Posterior vena cava (tissue), 2 donors: ENCODE measurements at regions of chr2 and their contacts with region 1.

Region 1: GRCh38 chr2:192645811-192646598 is 451.3 kb upstream of the TMEFF2 start:
- DNase-seq: no peak

Region 2: GRCh38 chr2:191976436-191976835 is 669.6 kb before region 1 on chr2:
- intact Hi-C with region 1: no loop called
- DNase-seq: no peak

Region 3: DNA sequence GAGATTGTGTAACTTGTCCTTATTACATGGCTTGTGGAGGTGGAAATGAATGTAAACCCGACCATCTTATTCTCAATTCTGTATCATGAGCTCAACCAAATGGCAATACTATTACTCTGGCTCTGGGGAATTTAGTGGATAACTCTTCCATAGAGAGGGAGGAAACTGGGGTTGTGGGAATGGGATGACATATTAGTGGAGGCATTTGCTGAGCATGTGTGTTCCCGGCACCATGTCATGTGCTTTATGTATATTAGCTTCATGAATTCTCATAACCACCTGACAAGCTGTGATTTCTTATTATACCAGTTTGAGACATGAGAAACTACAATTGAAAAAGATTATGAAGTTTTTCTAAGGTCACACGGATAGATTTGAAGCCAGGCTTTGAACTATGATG is 338.5 kb before region 1 on chr2:
- intact Hi-C with region 1: no loop called
- DNase-seq: no peak

Region 4: GRCh38 chr2:192585418-192585817 is 60.6 kb before region 1 on chr2:
- intact Hi-C with region 1: no loop called
- DNase-seq: no peak

Region 5: DNA sequence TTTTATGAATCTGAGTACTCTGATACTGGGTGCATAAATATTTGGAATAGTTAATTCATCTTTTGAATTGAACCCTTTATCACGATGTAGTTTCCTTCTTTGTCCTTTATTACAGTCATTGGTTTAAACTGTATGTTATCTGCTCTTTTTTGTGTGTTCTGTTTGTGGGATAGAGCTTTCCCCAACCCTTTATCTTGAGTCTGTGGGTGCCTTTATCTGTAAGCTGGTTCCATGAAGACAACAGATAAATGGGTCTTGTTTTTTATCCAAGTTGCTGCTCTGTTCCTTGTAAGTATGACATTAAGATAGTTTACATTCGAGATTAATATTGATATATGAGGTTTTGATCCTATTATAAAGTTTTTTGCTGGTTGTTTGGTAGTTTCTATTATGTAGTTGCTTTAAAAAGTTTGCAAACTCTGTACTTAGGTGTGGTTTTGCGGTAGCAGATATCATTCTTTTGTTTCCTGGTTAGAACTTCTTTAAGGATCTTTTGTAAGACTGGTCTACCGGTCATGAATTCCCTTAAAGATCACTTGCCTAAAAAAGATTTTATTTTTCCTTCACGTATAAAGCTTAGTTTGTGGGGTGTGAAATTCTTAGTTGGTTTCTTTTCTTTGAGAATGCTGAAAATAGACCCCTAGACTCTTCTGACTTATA is 1559.7 kb after region 1 on chr2:
- intact Hi-C with region 1: loop called in 1 of 2 experiments (anchors 5 kb)
- DNase-seq: no peak